Left ventricle myocardium inferior (tissue), 1 donor: ENCODE measurements at regions of chr9 and their contacts with region 1.

Region 1: GRCh38 chr9:71249729-71250317 is 128.4 kb upstream of the TRPM3 start:
- DNase-seq: no peak
- H3K4me3 ChIP-seq: no peak overlapping the region
- H3K27ac ChIP-seq: no peak overlapping the region
- H3K4me1 ChIP-seq: no peaks in the 10 kb centered on the region
- H3K27me3 ChIP-seq: peaks cover 18% of the 10 kb centered on the region
- CTCF ChIP-seq: peak; percentile 74

Region 2: GRCh38 chr9:70639853-70640814 is 609.7 kb before region 1 on chr9:
- intact Hi-C with region 1: loop called (anchors 2 kb)
- DNase-seq: no peak
- H3K4me3 ChIP-seq: no peak overlapping the region
- H3K27ac ChIP-seq: no peak overlapping the region
- H3K4me1 ChIP-seq: no peaks in the 10 kb centered on the region
- H3K27me3 ChIP-seq: no peaks in the 10 kb centered on the region
- CTCF ChIP-seq: peak; percentile 72

Region 3: GRCh38 chr9:70935856-70936255 is 314.0 kb before region 1 on chr9:
- intact Hi-C with region 1: loop called (anchors 10 kb)
- DNase-seq: no peak
- H3K4me3 ChIP-seq: no peak overlapping the region
- H3K27ac ChIP-seq: no peak overlapping the region
- H3K4me1 ChIP-seq: no peaks in the 10 kb centered on the region
- H3K27me3 ChIP-seq: no peaks in the 10 kb centered on the region
- CTCF ChIP-seq: no peak

Region 4: DNA sequence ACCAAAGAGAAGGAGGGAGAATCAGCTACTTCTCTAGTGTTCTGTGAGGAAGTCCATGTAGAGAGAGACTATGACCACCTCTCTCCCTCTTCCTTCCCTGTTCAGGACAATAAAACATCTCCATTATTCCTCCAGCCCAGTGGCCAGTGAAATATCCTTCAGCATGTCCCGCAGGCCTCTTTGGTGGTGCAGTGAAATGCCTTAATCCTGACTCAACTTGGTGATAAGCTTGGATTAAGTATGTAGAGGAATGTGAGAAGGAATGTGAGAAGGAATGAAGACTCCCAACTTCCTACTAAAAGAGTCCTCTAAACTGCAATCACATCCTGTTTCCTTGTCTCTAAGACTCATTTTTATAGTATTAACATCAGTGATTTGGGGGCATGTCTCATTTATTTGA is 295.7 kb before region 1 on chr9:
- intact Hi-C with region 1: no loop called
- DNase-seq: no peak
- H3K4me3 ChIP-seq: no peak overlapping the region
- H3K27ac ChIP-seq: no peak overlapping the region
- H3K4me1 ChIP-seq: no peaks in the 10 kb centered on the region
- H3K27me3 ChIP-seq: no peaks in the 10 kb centered on the region
- CTCF ChIP-seq: no peak

Region 5: GRCh38 chr9:71191708-71192107 is 58.1 kb before region 1 on chr9:
- intact Hi-C with region 1: no loop called
- DNase-seq: no peak
- H3K4me3 ChIP-seq: no peak overlapping the region
- H3K27ac ChIP-seq: no peak overlapping the region
- H3K4me1 ChIP-seq: no peaks in the 10 kb centered on the region
- H3K27me3 ChIP-seq: no peaks in the 10 kb centered on the region
- CTCF ChIP-seq: no peak